ENCODE measurements at regions of chr3 and their contacts with region 1.

Region 1: DNA sequence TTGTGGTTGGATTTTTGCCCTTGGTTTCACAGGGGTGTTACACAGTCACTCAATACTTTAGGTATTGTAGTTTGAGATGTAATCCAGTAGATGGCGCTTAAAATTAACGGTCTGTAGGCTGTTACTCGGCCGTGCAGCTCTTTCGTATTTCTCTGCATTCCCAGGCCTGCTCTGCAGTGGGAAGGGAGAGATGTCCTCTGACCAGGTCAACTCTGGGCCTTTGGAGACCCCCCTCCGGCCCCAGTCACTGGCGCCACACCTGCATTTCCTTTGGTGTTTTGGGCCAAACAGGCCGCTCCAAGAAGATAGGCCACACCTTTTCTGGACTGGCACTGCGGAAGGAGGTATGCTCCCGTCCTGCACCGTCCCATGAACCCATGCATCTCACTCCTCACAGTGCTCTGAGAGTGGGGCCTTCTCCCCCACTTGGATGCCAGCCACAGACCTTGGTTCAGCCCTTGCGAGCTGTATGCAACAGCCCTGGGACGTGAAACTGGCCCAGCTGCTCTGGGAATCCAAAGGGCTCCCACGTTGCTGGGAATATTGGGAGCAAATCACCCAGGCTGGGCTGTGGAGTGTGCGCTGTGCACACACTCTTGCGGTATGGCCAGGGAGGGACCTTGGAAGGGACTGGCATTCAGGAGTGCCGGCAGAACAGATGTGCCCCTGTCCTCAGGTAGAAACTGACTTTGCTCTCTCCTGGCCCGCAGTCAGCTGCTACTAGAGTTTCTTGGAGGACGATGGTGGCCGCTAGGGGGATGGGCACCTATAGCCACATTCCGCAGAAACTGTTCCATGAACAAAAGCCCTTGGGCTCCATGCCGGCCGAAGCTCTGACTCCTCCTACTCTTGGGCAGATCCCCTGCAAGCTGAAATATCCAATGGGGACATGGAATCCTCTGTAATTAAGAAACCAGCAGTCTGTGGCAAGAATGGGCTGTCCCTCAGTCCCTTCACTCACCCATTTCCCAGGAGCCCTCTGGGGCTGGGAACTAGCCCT is 410.5 kb upstream of the CADM2 start:
- DNase-seq: peak; percentile 34 to 63
- H3K4me3 ChIP-seq: no peak overlapping the region
- H3K27ac ChIP-seq: no peak overlapping the region
- H3K4me1 ChIP-seq: peaks cover 0 to 5% (median 0%) of the 10 kb centered on the region in 4 experiments; a peak in 3 of 7 replicates
- H3K27me3 ChIP-seq: no peaks in the 10 kb centered on the region
- CTCF ChIP-seq: peak in 2 of 3 experiments; percentile 56 to 65; a peak in 3 of 4 replicates
- EP300 ChIP-seq: no peak
- POLR2A ChIP-seq: no peak
- RAD21 ChIP-seq: peak; percentile 81 to 84

Region 2: DNA sequence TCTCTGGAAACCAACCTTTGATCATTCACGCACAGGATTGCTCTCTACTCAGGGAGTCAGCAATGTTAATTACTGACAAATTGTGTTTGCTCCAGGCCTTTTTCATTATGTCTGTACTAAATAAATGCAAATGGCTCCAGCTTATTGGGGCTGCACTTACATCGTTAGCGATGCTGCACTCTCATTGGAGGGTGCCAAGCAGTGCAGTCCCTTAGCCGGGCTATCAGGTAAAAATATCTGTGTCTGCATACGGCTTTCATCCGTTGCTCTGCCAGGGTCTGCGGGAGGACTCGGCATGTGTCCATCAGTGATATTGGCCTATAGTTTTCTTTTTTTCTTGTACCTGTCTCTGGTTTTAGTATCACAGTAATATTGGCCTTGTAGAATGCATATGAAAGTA is 61.0 kb before region 1 on chr3:
- CTCF ChIA-PET with region 1: no interaction called
- POLR2A ChIA-PET with region 1: no interaction called
- DNase-seq: no peak
- H3K4me3 ChIP-seq: no peak overlapping the region
- H3K27ac ChIP-seq: no peak overlapping the region
- H3K4me1 ChIP-seq: peaks cover 0 to 4% (median 0%) of the 10 kb centered on the region in 4 experiments; a peak in 1 of 7 replicates
- H3K27me3 ChIP-seq: no peaks in the 10 kb centered on the region
- CTCF ChIP-seq: no peak
- EP300 ChIP-seq: no peak
- POLR2A ChIP-seq: no peak
- RAD21 ChIP-seq: no peak

Region 3: GRCh38 chr3:84536916-84537315 is 11.4 kb before region 1 on chr3:
- CTCF ChIA-PET with region 1: interaction called, 10 read pairs
- POLR2A ChIA-PET with region 1: interaction called, 3 read pairs
- DNase-seq: no peak
- H3K4me3 ChIP-seq: no peak overlapping the region
- H3K27ac ChIP-seq: no peak overlapping the region
- H3K4me1 ChIP-seq: no peaks in the 10 kb centered on the region
- H3K27me3 ChIP-seq: no peaks in the 10 kb centered on the region
- CTCF ChIP-seq: no peak
- EP300 ChIP-seq: no peak
- POLR2A ChIP-seq: no peak
- RAD21 ChIP-seq: no peak

Region 4: DNA sequence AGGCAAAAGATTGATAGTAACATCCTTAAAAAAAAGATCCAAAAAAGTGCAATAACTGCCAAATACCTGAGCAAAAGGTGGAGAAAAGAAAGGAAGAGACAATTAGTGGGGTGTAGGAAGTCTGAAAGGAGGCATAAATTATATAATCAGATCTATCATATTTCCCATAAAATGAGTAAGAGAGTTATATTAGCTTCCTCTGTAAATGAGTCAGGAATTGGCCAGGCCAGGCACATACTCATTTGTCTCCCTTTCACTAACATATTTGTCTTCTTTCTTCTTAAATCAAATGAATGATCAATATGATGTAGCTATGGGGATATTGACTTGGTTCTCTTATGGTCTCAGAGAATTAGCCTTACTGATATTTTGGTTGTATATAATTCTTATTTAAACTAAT is 118.2 kb after region 1 on chr3:
- CTCF ChIA-PET with region 1: no interaction called
- POLR2A ChIA-PET with region 1: no interaction called
- DNase-seq: no peak
- H3K4me3 ChIP-seq: no peak overlapping the region
- H3K27ac ChIP-seq: no peak overlapping the region
- H3K4me1 ChIP-seq: no peaks in the 10 kb centered on the region
- H3K27me3 ChIP-seq: no peaks in the 10 kb centered on the region
- CTCF ChIP-seq: no peak
- EP300 ChIP-seq: no peak
- POLR2A ChIP-seq: no peak
- RAD21 ChIP-seq: no peak

Measured in H1 (cell line).